ENCODE measurements at regions of chr16 and their contacts with region 1.

Region 1: GRCh38 chr16:19130852-19131810 is 17.4 kb downstream of the ITPRIPL2 start:
- DNase-seq: no peak
- ATAC-seq: no peak
- H3K4me3 Mint-ChIP-seq: peak overlapping the region; percentile 25
- H3K27ac Mint-ChIP-seq: peak overlapping the region; percentile 35
- H3K4me1 Mint-ChIP-seq: peaks cover 42% of the 10 kb centered on the region
- H3K27me3 Mint-ChIP-seq: peaks cover 2% of the 10 kb centered on the region
- CTCF ChIP-seq: no peak

Region 2: DNA sequence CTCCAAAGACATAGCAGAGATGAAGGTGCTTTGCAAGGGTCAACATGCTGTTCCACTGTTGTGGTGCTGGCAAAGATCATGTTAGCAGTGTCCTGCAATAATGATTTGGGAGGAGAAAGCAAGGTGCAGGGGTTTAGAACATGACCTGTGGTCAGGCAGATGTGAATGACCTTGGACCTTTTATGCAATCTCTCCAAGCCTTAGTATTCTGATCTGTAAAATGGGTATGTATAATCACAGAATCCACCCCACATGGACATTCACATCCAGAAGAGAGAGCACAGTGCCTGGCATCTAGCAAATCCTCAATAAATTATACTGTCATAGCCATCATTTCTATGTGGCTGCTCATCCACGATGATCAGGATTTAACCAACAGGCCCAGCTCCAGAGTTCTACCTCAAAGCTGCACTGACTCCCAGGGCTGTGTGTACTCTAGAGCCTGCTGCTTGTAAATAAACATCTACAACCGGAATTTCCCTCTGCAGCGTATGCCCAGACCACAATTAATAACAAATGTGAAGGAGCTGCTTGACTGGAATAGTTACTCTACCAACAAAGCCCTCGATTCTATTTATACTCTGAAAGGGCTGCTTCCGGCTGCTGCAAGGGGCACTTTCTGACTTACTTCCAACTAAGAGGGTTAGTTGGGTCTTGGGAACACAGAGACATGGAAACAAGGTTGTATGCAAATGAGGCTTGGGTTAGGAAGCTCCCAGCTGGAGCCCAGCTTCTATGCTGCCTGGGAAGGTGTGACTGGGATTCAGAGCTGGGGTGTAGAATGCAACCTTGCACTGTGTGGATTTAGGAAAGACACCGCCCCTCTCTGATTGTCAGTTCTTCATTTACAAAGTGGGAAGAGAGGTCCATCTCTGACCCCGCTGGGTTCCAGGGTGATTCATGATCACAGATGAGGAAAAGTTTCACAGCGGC is 1925.6 kb before region 1 on chr16:
- CTCF ChIA-PET with region 1: no interaction called
- POLR2A ChIA-PET with region 1: no interaction called
- intact Hi-C with region 1: no loop called
- DNase-seq: no peak
- ATAC-seq: no peak
- H3K4me3 Mint-ChIP-seq: no peak overlapping the region
- H3K27ac Mint-ChIP-seq: no peak overlapping the region
- H3K4me1 Mint-ChIP-seq: peaks cover 6% of the 10 kb centered on the region
- H3K27me3 Mint-ChIP-seq: no peaks in the 10 kb centered on the region
- CTCF ChIP-seq: no peak

Region 3: GRCh38 chr16:19094541-19095365 is 36.4 kb before region 1 on chr16:
- CTCF ChIA-PET with region 1: interaction called, 3 read pairs
- POLR2A ChIA-PET with region 1: no interaction called
- intact Hi-C with region 1: loop called (anchors 5 kb)
- DNase-seq: no peak
- ATAC-seq: peak; percentile 65
- H3K4me3 Mint-ChIP-seq: no peak overlapping the region
- H3K27ac Mint-ChIP-seq: no peak overlapping the region
- H3K4me1 Mint-ChIP-seq: peaks cover 18% of the 10 kb centered on the region
- H3K27me3 Mint-ChIP-seq: no peaks in the 10 kb centered on the region
- CTCF ChIP-seq: no peak

Region 4: DNA sequence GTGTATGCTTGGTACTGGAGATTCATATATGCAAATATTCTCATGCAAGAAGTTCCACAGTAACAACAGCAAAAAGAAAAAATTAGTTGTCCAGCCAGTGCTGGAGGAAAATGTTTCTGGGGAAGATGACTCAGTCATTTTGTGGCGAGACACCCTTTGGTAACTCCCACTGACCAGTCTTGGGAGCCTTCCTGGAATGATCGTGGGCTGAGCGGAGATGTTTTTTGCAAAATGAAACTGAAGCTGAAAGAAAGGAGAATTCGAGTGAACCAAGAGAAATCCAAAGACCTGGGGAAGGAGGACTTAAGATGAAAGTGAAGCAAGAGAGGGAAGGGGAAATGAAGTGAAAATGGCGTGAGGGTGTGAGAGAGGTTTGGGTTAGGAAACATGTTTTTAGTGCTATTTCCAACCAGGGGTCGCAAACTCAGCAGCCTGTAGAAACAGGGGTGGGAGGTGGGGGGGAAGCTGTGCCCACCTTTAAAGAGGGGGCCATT is 12.1 kb before region 1 on chr16:
- CTCF ChIA-PET with region 1: no interaction called
- POLR2A ChIA-PET with region 1: interaction called, 17 read pairs
- intact Hi-C with region 1: no loop called
- DNase-seq: no peak
- ATAC-seq: peak; percentile 10
- H3K4me3 Mint-ChIP-seq: peak overlapping the region; percentile 83
- H3K27ac Mint-ChIP-seq: peak overlapping the region; percentile 82
- H3K4me1 Mint-ChIP-seq: peaks cover 40% of the 10 kb centered on the region
- H3K27me3 Mint-ChIP-seq: no peaks in the 10 kb centered on the region
- CTCF ChIP-seq: no peak

Measured in activated B cell treated with CpG ODN at 0.5 μM for 24 hours (primary cell).